Activated naive CD4-positive, alpha-beta T cell treated with anti-CD3 and anti-CD28 coated beads for 36 hours (primary cell): ENCODE measurements at regions of chr19 and their contacts with region 1.

Region 1: GRCh38 chr19:51393959-51394836 is 3.8 kb upstream of the C19orf84 start:
- DNase-seq: peak; percentile 98
- H3K4me3 Mint-ChIP-seq: peak overlapping the region; percentile 95
- H3K27ac Mint-ChIP-seq: peak overlapping the region; percentile 96
- H3K4me1 Mint-ChIP-seq: peaks cover 35% of the 10 kb centered on the region
- H3K27me3 Mint-ChIP-seq: no peaks in the 10 kb centered on the region

Region 2: DNA sequence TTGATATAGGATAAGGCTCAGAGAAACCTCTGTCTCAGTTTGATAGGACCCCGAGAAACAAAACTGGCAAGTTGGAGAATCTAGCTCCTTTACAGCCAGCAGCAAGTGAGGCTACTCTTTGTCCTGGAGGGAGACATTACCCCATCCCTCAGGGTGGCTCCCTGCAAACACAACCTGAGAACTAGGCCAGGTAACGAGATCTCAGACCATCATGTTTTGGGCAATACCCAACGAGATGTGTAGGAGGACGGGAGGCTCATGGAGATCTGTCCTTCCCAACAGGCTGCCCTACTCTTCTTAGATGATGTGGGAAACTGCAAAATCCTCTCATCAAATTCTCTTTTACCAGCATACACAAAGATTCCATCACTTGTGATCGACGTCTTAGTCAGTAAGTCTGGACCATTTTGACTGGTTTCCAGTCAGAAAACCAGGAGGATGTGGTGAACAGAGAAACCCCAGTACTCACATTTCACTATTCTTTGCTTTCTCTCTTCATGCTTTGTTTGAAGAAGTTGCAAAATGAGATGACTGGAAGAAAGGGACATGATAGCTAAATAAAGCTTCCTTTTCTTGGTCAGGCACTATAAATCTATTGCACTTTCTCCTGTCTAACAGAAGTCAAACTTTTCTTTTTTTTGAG is 280.0 kb before region 1 on chr19:
- CTCF ChIA-PET with region 1: no interaction called
- intact Hi-C with region 1: loop called (anchors 2 kb)
- DNase-seq: peak; percentile 61
- H3K4me3 Mint-ChIP-seq: no peak overlapping the region
- H3K27ac Mint-ChIP-seq: no peak overlapping the region
- H3K4me1 Mint-ChIP-seq: peaks cover 27% of the 10 kb centered on the region
- H3K27me3 Mint-ChIP-seq: no peaks in the 10 kb centered on the region

Region 3: GRCh38 chr19:51367565-51368365 is 26.4 kb before region 1 on chr19:
- CTCF ChIA-PET with region 1: interaction called, 7 read pairs
- intact Hi-C with region 1: loop called (anchors 1 kb)
- DNase-seq: peak; percentile 99
- H3K4me3 Mint-ChIP-seq: peak overlapping the region; percentile 94
- H3K27ac Mint-ChIP-seq: peak overlapping the region; percentile 95
- H3K4me1 Mint-ChIP-seq: peaks cover 58% of the 10 kb centered on the region
- H3K27me3 Mint-ChIP-seq: no peaks in the 10 kb centered on the region

Region 4: GRCh38 chr19:51407511-51408131 is 13.4 kb after region 1 on chr19:
- CTCF ChIA-PET with region 1: interaction called, 12 read pairs
- intact Hi-C with region 1: no loop called
- DNase-seq: peak; percentile 56
- H3K4me3 Mint-ChIP-seq: no peak overlapping the region
- H3K27ac Mint-ChIP-seq: no peak overlapping the region
- H3K4me1 Mint-ChIP-seq: no peaks in the 10 kb centered on the region
- H3K27me3 Mint-ChIP-seq: peaks cover 15% of the 10 kb centered on the region

Region 5: GRCh38 chr19:51514866-51515481 is 120.8 kb after region 1 on chr19:
- CTCF ChIA-PET with region 1: interaction called, 4 read pairs
- intact Hi-C with region 1: loop called (anchors 10 kb)
- DNase-seq: peak; percentile 31
- H3K4me3 Mint-ChIP-seq: no peak overlapping the region
- H3K27ac Mint-ChIP-seq: no peak overlapping the region
- H3K4me1 Mint-ChIP-seq: no peaks in the 10 kb centered on the region
- H3K27me3 Mint-ChIP-seq: peaks cover 15% of the 10 kb centered on the region